OCI-LY7 (cell line): ENCODE measurements at regions of chr9 and their contacts with region 1.

Region 1: DNA sequence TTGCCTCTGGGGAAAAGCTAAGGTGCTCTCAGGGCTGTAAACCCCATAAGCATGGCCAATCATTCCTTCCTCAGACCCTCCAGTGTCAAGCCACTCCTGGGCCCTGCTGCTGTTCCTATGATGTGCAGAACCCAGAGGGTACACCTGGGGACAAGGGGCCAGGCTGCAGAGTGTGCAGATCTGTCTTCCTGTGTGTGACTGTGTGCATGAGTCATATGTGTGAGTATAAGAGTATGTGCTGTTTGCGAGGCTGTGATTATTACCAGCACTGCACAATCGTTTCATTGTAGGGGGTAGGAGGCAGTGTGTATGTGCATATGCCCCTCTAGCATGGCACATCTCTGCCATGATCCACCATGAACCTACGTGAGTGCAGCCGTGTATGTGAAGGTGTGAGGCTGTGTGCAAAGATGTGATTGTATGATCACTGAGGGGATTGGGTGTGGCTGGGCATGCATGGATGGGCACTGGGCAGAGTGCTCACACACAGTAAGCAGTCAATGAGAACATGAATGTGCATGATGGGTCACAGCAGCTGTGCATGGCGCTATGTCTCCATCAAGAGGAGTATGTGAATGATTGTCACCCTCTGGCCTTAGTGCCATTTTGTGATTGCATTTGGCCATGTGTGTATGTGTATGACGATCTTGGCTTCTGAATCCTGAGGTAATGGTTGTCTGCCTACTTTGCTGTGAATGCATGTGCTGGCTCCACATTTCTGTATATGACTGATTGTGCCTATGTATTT is 2.4 kb upstream of the OR1K1 start:
- DNase-seq: no peak
- H3K4me3 ChIP-seq: no peak overlapping the region
- H3K27ac ChIP-seq: no peak overlapping the region
- H3K4me1 ChIP-seq: no peaks in the 10 kb centered on the region
- CTCF ChIP-seq: no peak

Region 2: DNA sequence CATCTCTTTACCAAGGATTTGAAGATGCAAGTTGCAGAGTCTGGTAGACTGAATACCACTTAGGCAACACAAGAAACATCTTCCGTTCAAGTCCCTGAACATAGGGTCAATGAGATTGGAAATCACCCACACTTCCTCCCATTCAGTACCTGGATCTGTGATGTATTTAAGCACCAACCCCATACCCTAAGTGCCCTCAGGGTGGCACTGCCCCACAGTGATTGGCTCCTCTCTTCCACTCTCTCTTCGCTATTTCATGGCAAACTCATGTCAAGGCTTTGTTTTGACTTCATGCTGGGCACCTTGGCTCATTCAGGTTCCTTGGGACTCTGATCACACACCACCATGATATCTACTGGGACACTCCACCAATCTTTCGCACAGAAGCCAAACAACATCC is 1351.5 kb before region 1 on chr9:
- CTCF ChIA-PET with region 1: no interaction called
- POLR2A ChIA-PET with region 1: no interaction called
- intact Hi-C with region 1: no loop called
- DNase-seq: peak; percentile 16
- H3K4me3 ChIP-seq: no peak overlapping the region
- H3K27ac ChIP-seq: no peak overlapping the region
- H3K4me1 ChIP-seq: no peaks in the 10 kb centered on the region
- CTCF ChIP-seq: peak; percentile 65

Region 3: GRCh38 chr9:122258886-122259415 is 538.5 kb before region 1 on chr9:
- CTCF ChIA-PET with region 1: no interaction called
- POLR2A ChIA-PET with region 1: interaction called, 10 read pairs
- intact Hi-C with region 1: no loop called
- DNase-seq: no peak
- H3K4me3 ChIP-seq: no peak overlapping the region
- H3K27ac ChIP-seq: no peak overlapping the region
- H3K4me1 ChIP-seq: peaks cover 24% of the 10 kb centered on the region
- CTCF ChIP-seq: no peak

Region 4: DNA sequence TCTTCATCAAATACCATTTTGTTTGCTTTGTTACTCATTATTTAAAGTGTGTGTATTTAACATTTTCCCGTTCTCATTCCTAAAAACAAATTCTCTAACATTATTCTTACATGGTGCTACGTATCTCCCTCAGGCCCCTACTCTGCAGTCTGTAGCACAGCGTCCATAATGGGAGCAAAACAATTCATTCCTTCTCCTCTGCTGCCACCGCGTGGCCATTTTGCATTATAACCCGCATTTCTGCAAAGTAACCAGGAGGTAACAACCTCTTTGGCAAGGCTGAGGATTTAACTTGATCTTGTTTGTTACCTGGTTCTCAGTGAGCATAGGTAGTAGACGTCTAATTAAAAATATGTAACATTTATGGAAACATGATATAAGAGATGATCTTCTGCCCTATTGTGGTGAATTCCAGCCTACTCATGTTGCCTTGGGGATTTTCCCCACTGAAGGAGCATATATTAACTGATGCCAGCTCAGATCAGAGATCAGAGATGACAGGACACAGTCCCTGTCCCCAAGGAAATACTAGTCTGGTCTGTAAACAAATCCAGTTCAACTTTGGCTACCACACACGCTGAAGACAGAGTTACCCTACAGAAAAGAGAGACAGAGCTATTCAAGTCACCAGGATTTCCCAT is 12.9 kb after region 1 on chr9:
- CTCF ChIA-PET with region 1: no interaction called
- POLR2A ChIA-PET with region 1: no interaction called
- intact Hi-C with region 1: no loop called
- DNase-seq: peak; percentile 79
- H3K4me3 ChIP-seq: no peak overlapping the region
- H3K27ac ChIP-seq: no peak overlapping the region
- H3K4me1 ChIP-seq: no peaks in the 10 kb centered on the region
- CTCF ChIP-seq: peak; percentile 92

Region 5: GRCh38 chr9:122865300-122865699 is 67.8 kb after region 1 on chr9:
- CTCF ChIA-PET with region 1: no interaction called
- POLR2A ChIA-PET with region 1: no interaction called
- intact Hi-C with region 1: no loop called
- DNase-seq: no peak
- H3K4me3 ChIP-seq: no peak overlapping the region
- H3K27ac ChIP-seq: no peak overlapping the region
- H3K4me1 ChIP-seq: no peaks in the 10 kb centered on the region
- CTCF ChIP-seq: no peak

Region 6: DNA sequence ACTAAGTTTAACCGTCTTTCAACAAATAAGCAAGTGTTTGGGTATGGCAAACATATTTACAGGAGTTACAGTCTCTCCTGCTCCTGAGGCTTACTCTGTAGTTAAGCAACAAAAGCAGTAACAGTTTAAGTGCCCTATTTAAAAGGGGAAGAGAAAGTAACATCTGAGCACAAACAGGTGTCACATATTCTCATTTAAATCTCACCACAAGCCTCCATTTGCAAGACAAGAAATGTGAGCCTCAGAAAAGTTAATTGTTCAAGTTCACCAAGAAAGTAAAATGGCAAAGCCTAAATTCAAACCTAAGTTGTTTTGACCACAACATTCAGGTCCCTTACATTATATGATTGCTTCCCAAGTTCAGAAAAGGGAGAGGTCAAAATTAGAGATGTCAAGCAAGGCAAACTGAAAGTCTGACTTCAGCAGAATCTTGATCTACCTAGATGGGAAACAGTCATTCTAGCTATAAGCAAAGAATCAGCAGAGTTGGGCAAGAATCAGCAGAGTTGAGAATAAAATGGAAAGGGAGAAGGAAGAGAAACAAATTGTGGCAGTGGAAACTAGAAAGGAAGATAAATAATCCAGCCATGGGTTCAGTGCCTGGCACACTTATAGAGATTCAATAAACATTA is 377.5 kb after region 1 on chr9:
- CTCF ChIA-PET with region 1: no interaction called
- POLR2A ChIA-PET with region 1: no interaction called
- intact Hi-C with region 1: no loop called
- DNase-seq: peak; percentile 93
- H3K4me3 ChIP-seq: peak overlapping the region; percentile 55
- H3K27ac ChIP-seq: peak overlapping the region; percentile 99
- H3K4me1 ChIP-seq: peaks cover 99% of the 10 kb centered on the region
- CTCF ChIP-seq: no peak